ENCODE measurements at regions of chr15 and their contacts with region 1.

Region 1: GRCh38 chr15:90320061-90320884 is 31.8 kb upstream of the ZNF774 start:
- DNase-seq: peak; percentile 85 to 92 (median 86)
- ATAC-seq: peak; percentile 100
- H3K4me3 ChIP-seq: no peak overlapping the region
- H3K27ac ChIP-seq: peak overlapping the region; percentile 21; the same call in 2 of the 3 replicates
- H3K4me1 ChIP-seq: peaks cover 3 to 4% of the 10 kb centered on the region in 2 experiments; a peak in 2 of 5 replicates
- H3K27me3 ChIP-seq: no peaks in the 10 kb centered on the region
- CTCF ChIP-seq: peak; percentile 99
- EP300 ChIP-seq: no peak
- POLR2A ChIP-seq: no peak
- RAD21 ChIP-seq: peak; percentile 97 to 98

Region 2: DNA sequence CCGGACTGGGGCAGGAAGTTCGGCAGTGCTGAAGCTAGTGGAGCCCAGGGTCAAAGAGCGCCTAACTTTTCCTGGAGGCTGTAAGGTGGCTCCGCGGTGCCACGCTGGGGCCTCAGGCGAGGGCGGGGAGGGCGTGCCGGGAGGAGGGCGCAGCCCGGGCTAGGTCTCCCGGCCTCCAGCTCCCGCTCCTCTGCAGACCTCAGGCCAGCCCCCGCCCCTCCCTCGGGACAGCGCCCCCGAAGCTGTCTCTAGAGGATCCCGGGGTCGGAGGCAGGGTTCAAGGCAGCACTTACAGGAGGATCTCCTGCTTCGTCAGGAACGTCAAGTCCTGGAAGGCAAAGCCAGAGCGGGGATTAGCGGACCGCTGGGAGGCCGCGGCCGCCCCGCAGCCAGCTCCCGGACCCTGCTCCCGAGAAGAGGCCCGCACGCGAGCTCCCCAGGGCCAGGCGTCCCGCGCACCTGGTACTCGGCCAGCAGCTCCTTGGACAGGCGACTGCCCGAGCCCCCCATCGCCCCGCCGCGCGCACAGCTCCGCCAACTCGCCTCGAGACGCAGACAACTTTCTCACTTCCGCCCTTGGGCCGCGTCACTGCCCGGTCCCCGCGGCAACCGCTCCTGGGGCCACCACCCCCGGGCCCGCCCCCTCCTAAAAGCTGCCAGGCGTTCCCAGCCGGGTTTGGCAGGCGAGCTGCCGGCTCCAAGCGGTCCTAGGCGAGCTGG is 86.7 kb before region 1 on chr15 and contains the start of gene CIB1:
- CTCF ChIA-PET with region 1: no interaction called
- POLR2A ChIA-PET with region 1: no interaction called
- in situ Hi-C with region 1: no loop called
- intact Hi-C with region 1: no loop called
- DNase-seq: peak; percentile 97 to 98 (median 98)
- ATAC-seq: peak; percentile 96
- H3K4me3 ChIP-seq: peak within 1 kb of the TSS; percentile 78
- H3K27ac ChIP-seq: peak within 1 kb of the TSS; percentile 83
- H3K4me1 ChIP-seq: peaks cover 7 to 35% of the 10 kb centered on the region in 2 experiments; a peak in 3 of 5 replicates
- H3K27me3 ChIP-seq: no peaks in the 10 kb centered on the region
- CTCF ChIP-seq: peak in 1 of 3 experiments; percentile 69; a peak in 3 of 6 replicates
- EP300 ChIP-seq: no peak
- POLR2A ChIP-seq: peak; percentile 78; the same call in 1 of the 2 replicates
- RAD21 ChIP-seq: no peak
- polyA plus RNA-seq, gene CIB1: 14.9 to 33.8 TPM

Region 3: DNA sequence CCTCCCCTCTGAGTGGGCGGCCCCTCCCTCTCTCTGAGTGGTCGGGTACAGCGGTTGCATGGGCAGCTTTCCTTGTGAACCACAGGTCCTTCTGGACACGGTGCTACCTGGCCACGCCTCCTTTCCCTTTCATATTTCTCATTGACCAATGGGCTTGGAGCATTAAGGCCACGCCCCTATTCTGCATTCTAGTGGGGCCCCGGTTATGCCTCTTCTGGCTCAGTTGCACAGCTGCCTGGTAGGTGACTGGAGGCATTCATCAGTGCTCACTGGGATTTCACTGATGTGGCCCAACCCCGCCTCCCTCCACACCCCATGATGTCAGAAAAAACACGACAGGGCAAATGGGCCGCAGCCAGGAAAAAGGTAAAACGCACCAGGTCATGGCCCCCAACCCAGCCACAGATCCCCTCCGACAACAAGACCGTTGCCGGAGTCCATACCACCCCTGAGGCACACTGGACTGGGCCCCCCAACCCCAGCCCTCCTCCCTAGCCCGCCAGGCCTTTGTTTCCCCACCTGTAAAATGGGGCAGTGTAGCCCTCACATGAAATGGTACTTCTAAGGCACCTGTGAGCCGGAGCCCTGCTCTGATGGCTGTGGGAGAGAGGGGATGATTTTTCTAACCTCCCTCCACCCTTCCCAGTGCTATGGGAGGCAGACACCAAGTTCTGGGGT is 28.5 kb before region 1 on chr15:
- CTCF ChIA-PET with region 1: interaction called, 3 read pairs
- POLR2A ChIA-PET with region 1: no interaction called
- in situ Hi-C with region 1: no loop called
- intact Hi-C with region 1: loop called (anchors 1 kb)
- DNase-seq: peak; percentile 87 to 90 (median 90)
- ATAC-seq: peak; percentile 76
- H3K4me3 ChIP-seq: no peak overlapping the region
- H3K27ac ChIP-seq: no peak overlapping the region
- H3K4me1 ChIP-seq: peaks cover 0 to 27% of the 10 kb centered on the region in 2 experiments; a peak in 4 of 5 replicates
- H3K27me3 ChIP-seq: no peaks in the 10 kb centered on the region; a peak in 1 of 5 replicates
- CTCF ChIP-seq: no peak
- EP300 ChIP-seq: no peak
- POLR2A ChIP-seq: no peak
- RAD21 ChIP-seq: no peak

Region 4: GRCh38 chr15:90309020-90309419 is 11.3 kb before region 1 on chr15:
- CTCF ChIA-PET with region 1: no interaction called
- POLR2A ChIA-PET with region 1: no interaction called
- in situ Hi-C with region 1: no loop called
- intact Hi-C with region 1: no loop called
- DNase-seq: no peak
- ATAC-seq: peak; percentile 47; the same call in 2 of the 3 replicates
- H3K4me3 ChIP-seq: no peak overlapping the region
- H3K27ac ChIP-seq: no peak overlapping the region
- H3K4me1 ChIP-seq: peaks cover 0 to 2% of the 10 kb centered on the region in 2 experiments; a peak in 1 of 5 replicates
- H3K27me3 ChIP-seq: no peaks in the 10 kb centered on the region
- CTCF ChIP-seq: no peak
- EP300 ChIP-seq: no peak
- POLR2A ChIP-seq: no peak
- RAD21 ChIP-seq: no peak

Region 5: DNA sequence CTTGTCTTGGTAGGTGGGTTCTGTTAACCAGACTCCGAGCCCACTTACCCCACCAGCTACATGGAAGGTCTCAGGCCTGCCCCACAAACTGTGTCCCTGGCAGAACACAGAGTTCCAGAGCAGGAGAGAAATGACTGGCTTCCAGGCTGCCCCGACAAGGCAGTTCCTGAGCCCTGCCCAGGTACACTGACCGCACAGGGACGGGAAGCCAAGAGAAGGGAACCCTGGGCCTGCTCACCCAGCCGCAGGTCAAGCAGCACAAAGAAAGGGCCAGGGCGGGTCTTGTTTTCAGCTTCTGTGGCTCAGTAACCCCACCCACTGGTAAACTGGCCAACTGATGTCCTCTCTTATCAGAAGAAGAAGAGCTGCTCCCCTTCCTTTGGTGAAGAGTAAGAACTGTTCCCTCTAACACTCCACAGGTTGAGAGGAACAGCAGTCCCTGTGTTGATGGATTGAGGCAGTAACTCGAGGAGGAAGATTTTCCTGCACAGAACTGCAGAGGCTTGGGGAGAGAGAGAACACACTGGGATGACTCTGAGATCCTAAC is 277.8 kb after region 1 on chr15:
- CTCF ChIA-PET with region 1: interaction called, 6 read pairs
- POLR2A ChIA-PET with region 1: interaction called, 3 read pairs
- in situ Hi-C with region 1: loop called (anchors 10 kb)
- intact Hi-C with region 1: loop called (anchors 5 kb)
- DNase-seq: peak; percentile 74 to 91 (median 81)
- ATAC-seq: peak; percentile 98
- H3K4me3 ChIP-seq: peak overlapping the region; percentile 4; the same call in 1 of the 2 replicates
- H3K27ac ChIP-seq: peak overlapping the region; percentile 86
- H3K4me1 ChIP-seq: peaks cover 24 to 34% of the 10 kb centered on the region in 2 experiments
- H3K27me3 ChIP-seq: no peaks in the 10 kb centered on the region
- CTCF ChIP-seq: peak; percentile 57 to 72 (median 66)
- EP300 ChIP-seq: no peak
- POLR2A ChIP-seq: peak; percentile 47; the same call in 1 of the 2 replicates
- RAD21 ChIP-seq: peak; percentile 60 to 83

Region 6: GRCh38 chr15:90603893-90604292 is 283.6 kb after region 1 on chr15:
- CTCF ChIA-PET with region 1: interaction called, 6 read pairs
- POLR2A ChIA-PET with region 1: no interaction called
- in situ Hi-C with region 1: loop called (anchors 10 kb)
- intact Hi-C with region 1: loop called (anchors 5 kb)
- DNase-seq: peak in 1 of 4 experiments; percentile 31
- ATAC-seq: peak; percentile 82
- H3K4me3 ChIP-seq: no peak overlapping the region
- H3K27ac ChIP-seq: no peak overlapping the region
- H3K4me1 ChIP-seq: peaks cover 4 to 5% of the 10 kb centered on the region in 2 experiments; a peak in 3 of 5 replicates
- H3K27me3 ChIP-seq: no peaks in the 10 kb centered on the region
- CTCF ChIP-seq: peak; percentile 46 to 58 (median 55)
- EP300 ChIP-seq: no peak
- POLR2A ChIP-seq: no peak
- RAD21 ChIP-seq: peak in 1 of 2 experiments; percentile 50; a peak in 2 of 4 replicates

Region 7: DNA sequence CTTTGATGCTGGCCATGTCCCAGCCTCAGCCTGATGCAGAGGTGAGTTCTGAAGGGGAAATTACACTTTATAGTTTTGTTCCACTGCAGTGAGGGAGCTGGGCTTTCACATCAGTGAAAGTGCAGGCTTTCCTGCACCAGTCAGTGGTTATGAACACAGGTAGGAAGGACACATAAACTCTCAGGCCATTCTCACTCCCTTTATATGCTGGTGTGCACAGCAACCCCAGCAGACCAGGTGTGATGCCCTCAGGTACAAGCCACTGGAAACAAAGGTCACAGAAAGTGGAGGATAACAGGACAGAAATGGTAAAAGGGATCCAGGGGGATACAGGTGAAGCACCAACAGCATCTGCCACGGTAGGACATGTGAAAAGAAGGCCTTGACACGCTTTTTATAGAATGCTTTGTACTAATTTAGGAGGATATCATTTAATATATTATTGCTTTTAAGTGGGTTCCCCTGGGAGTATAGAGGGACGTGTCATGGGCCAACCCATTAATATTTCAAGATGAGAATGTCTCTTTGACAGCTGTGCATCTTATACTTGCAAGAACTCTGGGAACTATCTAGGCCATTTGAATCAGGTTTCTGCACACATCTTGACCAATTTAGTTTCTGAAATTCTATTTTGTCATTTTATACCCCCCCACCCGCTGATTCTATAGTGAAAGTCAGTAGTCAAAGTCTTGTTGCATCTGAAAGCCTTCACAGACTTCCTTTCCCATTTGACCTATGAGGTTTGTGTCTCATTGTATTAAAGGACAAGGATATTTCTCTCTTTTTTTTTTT is 371.9 kb after region 1 on chr15:
- CTCF ChIA-PET with region 1: no interaction called
- POLR2A ChIA-PET with region 1: no interaction called
- in situ Hi-C with region 1: no loop called
- intact Hi-C with region 1: loop called (anchors 5 kb)
- DNase-seq: no peak
- ATAC-seq: no peak
- H3K4me3 ChIP-seq: no peak overlapping the region
- H3K27ac ChIP-seq: no peak overlapping the region
- H3K4me1 ChIP-seq: no peaks in the 10 kb centered on the region; a peak in 1 of 5 replicates
- H3K27me3 ChIP-seq: no peaks in the 10 kb centered on the region
- CTCF ChIP-seq: no peak
- EP300 ChIP-seq: no peak
- POLR2A ChIP-seq: no peak
- RAD21 ChIP-seq: no peak

Region 8: DNA sequence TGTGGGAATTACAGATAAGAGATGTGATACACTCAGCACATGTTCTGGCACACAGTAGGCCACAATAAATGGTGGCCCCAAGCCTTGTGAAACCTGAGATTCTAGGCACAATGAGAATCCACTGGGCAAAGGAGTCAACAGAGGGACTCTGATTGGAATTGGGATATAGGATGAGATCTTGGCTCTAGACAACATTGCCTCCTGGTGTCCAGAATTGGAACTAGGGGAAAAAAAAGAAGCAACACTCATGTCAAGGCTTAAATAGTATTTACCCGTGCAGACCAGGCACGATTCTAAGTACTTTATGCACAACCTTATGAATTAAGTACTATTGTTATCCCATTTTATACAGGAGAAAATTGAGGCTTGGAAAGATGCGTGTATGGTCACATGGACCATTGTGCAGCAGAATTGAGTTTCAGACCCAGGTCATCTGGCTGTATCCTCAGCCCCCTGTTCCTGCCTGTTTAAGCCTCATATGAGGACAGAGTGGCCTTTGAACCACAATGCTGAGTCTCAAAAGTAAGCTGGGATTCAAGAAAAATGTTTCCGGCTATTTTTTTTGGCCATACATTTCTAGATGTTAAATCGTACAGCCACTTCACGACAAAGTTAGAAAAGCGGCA is 904.6 kb after region 1 on chr15:
- CTCF ChIA-PET with region 1: interaction called, 5 read pairs
- POLR2A ChIA-PET with region 1: no interaction called
- in situ Hi-C with region 1: loop called (anchors 25 kb)
- intact Hi-C with region 1: no loop called
- DNase-seq: peak; percentile 48 to 60 (median 48)
- ATAC-seq: peak; percentile 84
- H3K4me3 ChIP-seq: no peak overlapping the region
- H3K27ac ChIP-seq: no peak overlapping the region
- H3K4me1 ChIP-seq: no peaks in the 10 kb centered on the region
- H3K27me3 ChIP-seq: peaks cover 13 to 36% of the 10 kb centered on the region in 2 experiments
- CTCF ChIP-seq: peak; percentile 60 to 87 (median 76)
- EP300 ChIP-seq: no peak
- POLR2A ChIP-seq: no peak
- RAD21 ChIP-seq: peak; percentile 71 to 89

Measured in K562 (cell line).